CD4-positive, alpha-beta memory T cell (primary cell): ENCODE measurements at regions of chr15 and their contacts with region 1.

Region 1: DNA sequence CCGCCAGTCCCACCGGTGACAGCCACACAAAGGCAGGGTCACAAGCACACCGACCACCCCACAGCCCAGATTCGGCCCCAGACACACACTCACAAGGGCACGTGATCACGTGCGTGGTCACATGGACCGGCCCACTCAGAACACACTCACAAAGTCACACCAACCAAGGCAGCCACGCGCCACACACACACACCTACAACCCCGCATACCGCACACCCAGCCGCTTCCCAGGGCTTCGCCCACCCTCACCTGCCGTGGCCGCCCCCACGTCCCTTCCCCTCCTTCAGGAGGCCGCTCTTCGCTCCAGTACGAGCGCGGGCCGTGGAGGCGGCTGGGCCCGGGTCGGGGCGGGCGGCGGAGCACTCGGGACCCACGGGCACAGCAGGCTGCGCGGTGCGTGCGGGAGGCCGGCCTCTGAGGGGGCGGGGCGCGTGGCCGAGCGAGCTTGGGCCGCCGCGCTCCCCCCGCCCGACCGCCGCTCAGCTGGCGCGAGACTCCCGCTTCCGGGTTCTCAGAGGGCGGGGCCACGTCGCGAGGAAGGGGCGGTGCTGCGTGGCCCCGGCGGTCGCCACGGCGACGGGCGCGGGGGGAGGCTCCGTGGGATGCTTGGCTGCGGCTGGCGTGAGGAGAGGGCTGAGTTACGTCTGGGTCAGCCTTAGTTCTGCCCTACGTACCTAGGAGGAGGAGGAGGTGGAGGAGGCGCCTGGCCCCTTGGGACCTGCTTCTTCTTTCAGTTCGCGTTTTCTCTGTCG is at the start of gene SPG21:
- DNase-seq: peak; percentile 87 to 91 (median 88)
- H3K4me3 ChIP-seq: peak within 1 kb of the TSS; percentile 96 to 99
- H3K4me3 Mint-ChIP-seq: peak within 1 kb of the TSS; percentile 93 to 99 (median 97)
- H3K27ac ChIP-seq: peak within 1 kb of the TSS; percentile 81
- H3K27ac Mint-ChIP-seq: peak within 1 kb of the TSS; percentile 93 to 98 (median 97)
- H3K4me1 ChIP-seq: peaks cover 35% of the 10 kb centered on the region
- H3K4me1 Mint-ChIP-seq: peaks cover 29 to 53% (median 42%) of the 10 kb centered on the region in 4 donors
- H3K27me3 ChIP-seq: no peaks in the 10 kb centered on the region
- H3K27me3 Mint-ChIP-seq: no peaks in the 10 kb centered on the region
- total RNA-seq, gene SPG21: 57.2 to 61.1 TPM

Region 2: DNA sequence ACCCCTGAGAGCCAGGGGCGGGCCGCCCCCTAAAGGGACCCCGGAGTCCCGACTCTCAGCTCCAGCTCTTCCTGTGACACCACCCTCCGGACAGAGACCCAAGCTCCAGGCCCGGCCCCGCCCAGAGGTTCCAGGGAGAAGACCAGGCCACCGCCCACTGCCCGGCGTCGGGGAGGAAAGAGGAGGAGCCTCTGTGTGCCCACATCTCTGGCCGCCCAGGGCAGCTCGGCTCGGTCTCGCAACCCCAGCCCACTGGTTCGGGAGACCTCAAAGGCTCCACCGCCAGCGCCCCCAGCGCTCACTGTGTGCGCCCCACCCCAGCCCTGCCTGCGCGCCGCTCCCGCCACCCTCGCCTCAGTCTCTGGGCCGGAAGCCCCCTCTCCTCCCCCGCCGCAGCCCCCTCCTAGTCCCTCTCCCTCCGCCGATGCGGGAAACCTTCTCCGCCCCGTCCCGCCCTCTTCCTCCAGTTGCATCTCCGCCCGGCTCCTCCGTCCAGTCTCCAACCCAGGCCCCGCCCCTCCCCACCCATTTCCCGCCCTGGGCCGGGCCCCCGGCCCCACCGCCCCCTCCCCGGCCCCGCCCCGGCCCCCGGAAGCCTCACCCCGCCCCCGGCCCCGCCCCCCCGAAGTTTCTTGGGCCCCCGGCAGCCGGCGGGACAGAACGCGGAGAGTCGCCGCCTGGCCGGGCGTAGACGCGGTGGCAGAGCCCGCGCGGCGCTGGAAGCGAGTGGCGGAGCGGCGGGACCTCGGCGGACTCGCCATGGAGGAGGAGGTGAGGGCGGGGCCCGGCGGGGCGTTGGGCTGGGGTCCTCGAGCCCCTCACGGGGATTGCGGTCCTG is 148.1 kb before region 1 on chr15 and contains the start of gene PLEKHO2:
- CTCF ChIA-PET with region 1: no interaction called
- POLR2A ChIA-PET with region 1: interaction called, 4 read pairs
- intact Hi-C with region 1: loop called (anchors 5 kb)
- DNase-seq: peak; percentile 83 to 95 (median 87)
- H3K4me3 ChIP-seq: peak within 1 kb of the TSS; percentile 81 to 88
- H3K4me3 Mint-ChIP-seq: peak within 1 kb of the TSS; percentile 85 to 99 (median 98)
- H3K27ac ChIP-seq: peak within 1 kb of the TSS; percentile 84
- H3K27ac Mint-ChIP-seq: peak within 1 kb of the TSS; percentile 78 to 99 (median 97)
- H3K4me1 ChIP-seq: peaks cover 90% of the 10 kb centered on the region
- H3K4me1 Mint-ChIP-seq: peaks cover 55 to 86% (median 70%) of the 10 kb centered on the region in 4 donors
- H3K27me3 ChIP-seq: no peaks in the 10 kb centered on the region
- H3K27me3 Mint-ChIP-seq: no peaks in the 10 kb centered on the region
- total RNA-seq, gene PLEKHO2: 22.7 to 24.1 TPM

Region 3: GRCh38 chr15:64856429-64857145 is 133.0 kb before region 1 on chr15:
- CTCF ChIA-PET with region 1: no interaction called
- POLR2A ChIA-PET with region 1: no interaction called
- intact Hi-C with region 1: no loop called
- DNase-seq: no peak
- H3K4me3 ChIP-seq: no peak overlapping the region
- H3K4me3 Mint-ChIP-seq: peak overlapping the region in 5 of 8 donors; percentile 1 to 50 (median 38)
- H3K27ac ChIP-seq: no peak overlapping the region
- H3K27ac Mint-ChIP-seq: peak overlapping the region; percentile 71 to 91 (median 79)
- H3K4me1 ChIP-seq: peaks cover 55% of the 10 kb centered on the region
- H3K4me1 Mint-ChIP-seq: peaks cover 38 to 68% (median 54%) of the 10 kb centered on the region in 4 donors
- H3K27me3 ChIP-seq: no peaks in the 10 kb centered on the region
- H3K27me3 Mint-ChIP-seq: no peaks in the 10 kb centered on the region

Region 4: GRCh38 chr15:65028921-65029735 is 39.5 kb after region 1 on chr15 and contains the start of gene MTFMT:
- CTCF ChIA-PET with region 1: interaction called, 3 read pairs
- POLR2A ChIA-PET with region 1: no interaction called
- intact Hi-C with region 1: loop called (anchors 1 kb)
- DNase-seq: peak; percentile 83 to 90 (median 85)
- H3K4me3 ChIP-seq: peak within 1 kb of the TSS; percentile 71 to 84
- H3K4me3 Mint-ChIP-seq: peak within 1 kb of the TSS; percentile 87 to 95 (median 94)
- H3K27ac ChIP-seq: peak within 1 kb of the TSS; percentile 70
- H3K27ac Mint-ChIP-seq: peak within 1 kb of the TSS; percentile 43 to 97 (median 84)
- H3K4me1 ChIP-seq: peaks cover 17% of the 10 kb centered on the region
- H3K4me1 Mint-ChIP-seq: peaks cover 11 to 24% (median 20%) of the 10 kb centered on the region in 4 donors
- H3K27me3 ChIP-seq: no peaks in the 10 kb centered on the region
- H3K27me3 Mint-ChIP-seq: peaks cover 3 to 16% of the 10 kb centered on the region in 2 donors
- total RNA-seq, gene MTFMT: 15.2 to 18.3 TPM

Region 5: DNA sequence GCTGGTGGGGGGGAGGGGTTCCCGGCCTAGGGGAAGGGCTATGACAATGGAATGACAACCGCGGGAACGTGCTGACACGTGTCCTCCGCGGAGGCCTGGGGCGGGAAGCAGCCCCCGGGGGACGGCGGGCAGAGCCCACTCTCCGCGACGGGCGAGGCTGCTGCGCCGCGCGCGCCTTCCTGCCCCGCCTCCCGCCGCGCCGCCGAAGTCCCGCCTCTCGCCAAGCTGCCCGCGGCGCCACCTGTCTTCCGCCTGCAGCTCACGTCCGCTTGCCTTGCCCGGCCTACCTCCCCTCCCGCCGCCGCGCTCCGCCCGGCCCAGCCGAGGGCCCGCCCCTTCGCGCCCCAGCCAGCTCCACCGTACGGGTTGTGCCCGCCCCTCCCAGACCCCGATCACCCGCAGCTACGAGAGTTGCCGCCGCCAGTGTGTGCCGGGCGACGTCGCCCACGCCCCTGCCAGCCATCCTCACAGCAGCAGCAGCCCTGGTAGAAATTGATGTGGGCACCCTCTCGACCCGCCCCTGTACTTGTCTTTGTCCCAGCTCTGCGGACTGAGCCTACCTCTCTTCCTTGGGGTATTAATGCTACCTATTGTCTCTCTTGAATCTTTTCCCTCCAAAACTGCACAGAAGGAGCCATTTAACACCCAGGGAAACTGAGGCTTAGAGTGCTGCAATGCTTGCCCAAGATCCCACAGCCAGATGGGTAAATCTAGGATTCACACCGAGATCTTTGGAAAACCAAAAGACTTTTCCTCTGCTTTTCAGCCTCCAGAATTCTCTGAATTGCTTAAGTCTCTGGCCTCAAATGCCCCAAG is 297.3 kb after region 1 on chr15 and contains the start of gene PARP16:
- CTCF ChIA-PET with region 1: no interaction called
- POLR2A ChIA-PET with region 1: no interaction called
- intact Hi-C with region 1: loop called (anchors 1 kb)
- DNase-seq: peak; percentile 89 to 92 (median 90)
- H3K4me3 ChIP-seq: peak within 1 kb of the TSS; percentile 68 to 78
- H3K4me3 Mint-ChIP-seq: peak within 1 kb of the TSS; percentile 87 to 92 (median 90)
- H3K27ac ChIP-seq: peak within 1 kb of the TSS; percentile 86
- H3K27ac Mint-ChIP-seq: peak within 1 kb of the TSS; percentile 80 to 97 (median 95)
- H3K4me1 ChIP-seq: peaks cover 29% of the 10 kb centered on the region
- H3K4me1 Mint-ChIP-seq: peaks cover 28 to 43% (median 34%) of the 10 kb centered on the region in 4 donors
- H3K27me3 ChIP-seq: no peaks in the 10 kb centered on the region
- H3K27me3 Mint-ChIP-seq: no peaks in the 10 kb centered on the region
- total RNA-seq, gene PARP16: 20.8 to 21.4 TPM

Region 6: DNA sequence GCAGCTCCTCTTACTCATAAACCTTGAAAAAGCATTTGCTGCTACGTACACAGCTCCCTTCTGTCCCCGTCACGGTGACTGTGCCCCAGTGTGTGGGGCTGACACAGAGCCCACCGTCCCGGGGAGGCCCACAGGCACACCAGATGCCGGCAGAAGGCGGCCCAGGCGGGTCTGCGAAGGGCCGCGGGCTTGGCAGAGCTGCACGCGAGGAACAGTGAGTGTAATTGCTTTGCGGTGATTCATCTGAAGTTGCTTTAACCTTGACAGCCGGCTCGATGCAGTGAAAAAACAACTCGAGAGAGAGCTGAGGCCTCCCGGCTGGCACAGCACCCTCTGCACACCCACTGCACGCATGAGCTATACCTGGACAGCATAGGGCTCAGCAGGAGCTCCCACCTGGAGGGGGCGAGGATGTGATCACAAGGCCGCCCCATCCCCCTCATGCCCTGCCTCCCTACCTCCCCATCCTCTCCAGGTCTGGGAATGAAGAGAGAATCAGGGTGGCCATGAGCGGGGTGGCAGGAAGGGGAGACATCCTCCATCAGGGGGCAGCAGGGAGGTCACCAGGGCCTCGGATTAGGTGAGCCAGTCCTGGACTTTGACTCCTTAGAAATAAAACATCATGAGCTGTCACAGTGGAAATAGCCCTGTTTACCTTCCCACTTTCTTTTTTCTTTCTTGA is 1091.3 kb after region 1 on chr15:
- CTCF ChIA-PET with region 1: no interaction called
- POLR2A ChIA-PET with region 1: no interaction called
- intact Hi-C with region 1: no loop called
- DNase-seq: no peak
- H3K4me3 ChIP-seq: no peak overlapping the region
- H3K4me3 Mint-ChIP-seq: no peak overlapping the region
- H3K27ac ChIP-seq: no peak overlapping the region
- H3K27ac Mint-ChIP-seq: no peak overlapping the region
- H3K4me1 ChIP-seq: no peaks in the 10 kb centered on the region
- H3K4me1 Mint-ChIP-seq: no peaks in the 10 kb centered on the region
- H3K27me3 ChIP-seq: peaks cover 3% of the 10 kb centered on the region
- H3K27me3 Mint-ChIP-seq: peaks cover 18 to 19% of the 10 kb centered on the region in 2 donors